Esophagus muscularis mucosa (tissue), 4 donors: ENCODE measurements at regions of chr2 and their contacts with region 1.

Region 1: DNA sequence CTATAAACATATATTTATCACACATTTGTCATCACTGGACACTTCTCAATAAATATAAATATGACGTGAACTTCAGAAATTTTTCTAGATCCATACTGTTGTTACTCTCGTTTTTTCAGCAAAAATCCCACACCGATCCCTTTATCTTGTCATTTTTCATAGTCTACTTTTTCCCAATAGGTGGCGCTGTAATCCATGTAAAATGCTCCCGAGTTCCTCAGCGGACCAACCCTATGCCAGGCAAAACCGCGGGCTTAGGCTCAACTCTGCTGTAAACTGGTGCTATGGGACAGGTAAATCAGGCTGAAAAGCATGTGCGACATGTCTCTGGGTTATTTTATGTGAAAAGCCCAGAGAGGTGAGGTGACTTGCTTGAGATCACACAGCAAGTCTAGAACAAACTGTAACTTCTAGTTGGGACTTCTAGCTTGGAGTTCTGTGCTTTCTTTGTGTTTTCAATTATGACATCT is 104.0 kb downstream of the COBLL1 start:
- DNase-seq: no peak
- H3K4me3 ChIP-seq: peak overlapping the region in 1 of 4 donors; percentile 21
- H3K27ac ChIP-seq: no peak overlapping the region
- H3K4me1 ChIP-seq: peaks cover 23 to 54% (median 48%) of the 10 kb centered on the region in 4 donors
- H3K27me3 ChIP-seq: no peaks in the 10 kb centered on the region
- CTCF ChIP-seq: peak; percentile 69 to 82 (median 81)
- EP300 ChIP-seq: no peak
- POLR2A ChIP-seq: no peak

Region 2: GRCh38 chr2:164782323-164782722 is 44.7 kb after region 1 on chr2:
- intact Hi-C with region 1: loop called (anchors 5 kb)
- DNase-seq: no peak
- H3K4me3 ChIP-seq: no peak overlapping the region
- H3K27ac ChIP-seq: peak overlapping the region; percentile 80 to 90 (median 86)
- H3K4me1 ChIP-seq: peaks cover 61 to 87% (median 81%) of the 10 kb centered on the region in 4 donors
- H3K27me3 ChIP-seq: no peaks in the 10 kb centered on the region
- CTCF ChIP-seq: no peak
- EP300 ChIP-seq: no peak
- POLR2A ChIP-seq: no peak

Region 3: DNA sequence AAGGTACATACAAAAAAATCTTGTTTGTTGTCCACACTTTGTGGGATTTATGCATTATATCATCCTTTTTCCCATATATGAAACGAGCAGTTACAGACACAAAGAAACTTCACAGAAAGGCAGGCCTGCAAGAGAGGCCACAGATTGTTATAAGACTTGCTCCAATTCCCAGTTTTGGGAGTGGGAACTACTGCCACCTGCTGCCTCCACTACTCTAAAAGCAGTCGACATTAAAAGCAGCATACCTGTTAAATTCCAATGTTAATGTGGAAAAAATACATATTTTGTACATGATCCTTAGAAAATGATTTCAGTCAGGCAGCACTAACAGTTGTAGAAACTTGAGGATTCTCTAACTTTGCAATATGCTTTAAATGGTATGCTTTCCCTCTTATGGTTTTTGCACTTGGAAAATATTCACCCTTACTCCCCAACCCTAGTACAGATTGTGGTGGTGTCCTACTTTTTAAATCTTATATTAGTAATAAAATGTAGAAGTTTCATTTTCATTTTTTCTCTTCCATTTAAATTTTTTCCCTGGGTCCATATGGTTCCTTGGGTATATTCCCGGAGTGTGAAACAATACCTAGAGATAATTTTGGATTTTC is 179.8 kb after region 1 on chr2:
- intact Hi-C with region 1: loop called (anchors 1 kb)
- DNase-seq: no peak
- H3K4me3 ChIP-seq: no peak overlapping the region
- H3K27ac ChIP-seq: no peak overlapping the region
- H3K4me1 ChIP-seq: peaks cover 6 to 28% (median 11%) of the 10 kb centered on the region in 4 donors
- H3K27me3 ChIP-seq: no peaks in the 10 kb centered on the region
- CTCF ChIP-seq: peak; percentile 60 to 75 (median 65)
- EP300 ChIP-seq: no peak
- POLR2A ChIP-seq: no peak

Region 4: GRCh38 chr2:165161510-165161909 is 423.9 kb after region 1 on chr2:
- intact Hi-C with region 1: no loop called
- DNase-seq: no peak
- H3K4me3 ChIP-seq: no peak overlapping the region
- H3K27ac ChIP-seq: no peak overlapping the region
- H3K4me1 ChIP-seq: no peaks in the 10 kb centered on the region
- H3K27me3 ChIP-seq: no peaks in the 10 kb centered on the region
- CTCF ChIP-seq: no peak
- EP300 ChIP-seq: no peak
- POLR2A ChIP-seq: no peak